ENCODE measurements at regions of chr7 and their contacts with region 1.

Region 1: DNA sequence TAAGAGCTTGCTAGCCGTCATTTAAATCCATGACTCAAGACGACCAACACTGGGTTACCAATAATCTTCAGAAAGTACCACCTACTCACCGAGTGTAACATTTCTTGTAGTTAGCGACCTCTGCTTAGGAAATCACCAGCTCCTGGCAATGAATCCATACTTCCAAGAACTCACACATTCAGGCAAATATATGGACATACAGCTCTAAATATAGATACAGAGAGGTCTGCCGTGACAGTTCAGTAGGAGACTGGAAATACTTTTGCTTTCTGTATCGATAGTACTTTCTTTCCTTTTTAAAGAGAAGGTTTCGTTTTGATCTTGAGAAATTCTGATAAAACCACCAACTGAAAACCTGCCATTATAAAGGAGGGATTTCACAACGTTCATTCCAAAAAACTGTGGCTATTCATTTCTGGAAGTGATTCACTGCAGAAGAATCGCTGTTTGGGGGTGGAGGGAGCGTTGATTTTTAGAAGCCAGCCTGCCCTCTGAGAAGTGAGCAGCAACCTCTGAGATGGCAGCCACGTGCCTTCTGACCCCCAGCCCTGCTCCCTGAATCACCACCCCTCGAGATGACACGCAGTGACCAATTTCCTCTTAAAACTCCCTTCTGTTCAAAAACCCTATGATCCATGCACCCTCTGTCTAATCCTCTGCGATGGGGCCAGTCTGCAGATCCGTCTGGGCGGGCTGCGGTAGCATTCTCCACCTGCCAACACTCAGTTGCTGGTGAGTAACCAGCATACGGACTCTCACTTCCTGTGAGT is 179.0 kb upstream of the KLF14 start:
- DNase-seq: peak; percentile 92
- ATAC-seq: peak; percentile 73
- H3K4me3 Mint-ChIP-seq: peak overlapping the region; percentile 88
- H3K27ac Mint-ChIP-seq: peak overlapping the region; percentile 99
- H3K4me1 Mint-ChIP-seq: peaks cover 90% of the 10 kb centered on the region
- H3K27me3 Mint-ChIP-seq: no peaks in the 10 kb centered on the region

Region 2: GRCh38 chr7:129952653-129953560 is 960.1 kb before region 1 on chr7 and contains the start of gene UBE2H:
- CTCF ChIA-PET with region 1: no interaction called
- POLR2A ChIA-PET with region 1: no interaction called
- intact Hi-C with region 1: loop called in 1 of 2 experiments (anchors 2 kb)
- DNase-seq: peak; percentile 96
- ATAC-seq: peak; percentile 66
- H3K4me3 Mint-ChIP-seq: no peak within 1 kb of the TSS
- H3K27ac Mint-ChIP-seq: peak within 1 kb of the TSS; percentile 99
- H3K4me1 Mint-ChIP-seq: peaks cover 8% of the 10 kb centered on the region
- H3K27me3 Mint-ChIP-seq: no peaks in the 10 kb centered on the region
- total RNA-seq, gene UBE2H: 25.6 to 40.7 TPM

Region 3: DNA sequence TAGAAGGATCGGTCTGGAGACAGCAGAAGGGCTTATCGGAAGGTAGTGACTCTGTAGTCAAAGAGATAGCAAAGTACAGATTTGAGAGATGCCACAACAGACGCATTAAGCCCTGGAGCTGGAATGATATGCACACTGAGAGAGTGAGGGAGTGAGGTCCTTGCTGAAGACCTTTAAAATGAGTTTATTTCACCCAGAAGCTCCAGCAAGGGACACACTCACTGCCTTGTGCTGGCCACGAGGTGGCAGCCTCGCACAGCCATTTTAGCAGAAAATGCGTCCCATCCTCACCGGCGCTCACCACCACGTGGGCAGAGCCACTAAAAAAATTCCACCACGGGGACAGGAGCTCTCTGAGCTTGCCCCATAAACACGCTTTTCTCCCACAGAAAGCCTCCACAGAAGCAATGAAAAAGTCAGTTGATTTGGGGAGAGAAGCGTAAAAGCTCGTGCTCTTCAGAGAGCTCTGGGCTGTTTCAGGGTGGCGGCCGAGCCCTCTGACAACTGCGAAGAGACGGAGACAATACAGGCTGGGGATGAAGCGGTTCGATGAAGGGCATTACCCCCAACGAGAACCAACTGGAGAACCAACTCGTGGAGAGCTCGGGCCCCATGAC is 16.0 kb before region 1 on chr7:
- CTCF ChIA-PET with region 1: interaction called, 96 read pairs
- POLR2A ChIA-PET with region 1: interaction called, 35 read pairs
- intact Hi-C with region 1: loop called (anchors 1 kb)
- DNase-seq: peak; percentile 87
- ATAC-seq: peak; percentile 56
- H3K4me3 Mint-ChIP-seq: peak overlapping the region; percentile 22
- H3K27ac Mint-ChIP-seq: peak overlapping the region; percentile 88
- H3K4me1 Mint-ChIP-seq: peaks cover 94% of the 10 kb centered on the region
- H3K27me3 Mint-ChIP-seq: no peaks in the 10 kb centered on the region

Region 4: DNA sequence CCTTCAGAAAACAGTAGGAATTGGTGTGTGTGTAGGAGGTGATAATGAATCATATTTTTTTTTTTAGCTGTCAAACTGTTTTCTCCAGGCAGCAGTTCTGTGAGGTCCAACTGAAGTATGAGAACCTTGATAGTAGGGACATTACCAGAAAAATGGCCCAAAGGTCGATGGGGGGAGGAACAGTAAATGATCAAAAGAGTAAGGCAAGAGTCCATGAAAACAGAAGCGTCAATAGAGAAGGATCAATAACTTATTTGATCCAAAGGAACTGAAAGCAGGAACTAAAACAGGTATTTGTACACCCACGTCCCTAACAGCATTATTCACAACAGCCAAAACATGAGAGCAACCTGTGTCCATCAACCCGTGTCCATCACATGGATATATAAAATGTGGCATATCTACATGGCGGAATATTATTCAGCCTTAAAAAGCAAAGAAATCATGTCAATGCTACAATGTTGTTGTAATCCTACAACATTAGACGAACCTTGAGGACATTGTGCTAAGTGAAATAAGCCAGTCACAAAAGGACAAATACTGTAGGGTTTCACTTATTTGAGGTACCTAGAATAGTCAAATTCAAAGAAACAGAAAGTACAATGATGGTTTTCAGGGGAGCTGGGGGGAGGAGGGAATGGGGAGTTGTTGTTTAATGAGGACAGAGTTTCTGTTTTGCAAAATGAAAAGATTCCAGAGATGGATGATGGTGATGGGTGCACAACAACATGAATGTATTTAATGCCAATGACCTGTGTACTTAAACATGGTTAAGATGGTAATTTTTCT is 34.9 kb after region 1 on chr7:
- CTCF ChIA-PET with region 1: interaction called, 7 read pairs
- POLR2A ChIA-PET with region 1: interaction called, 14 read pairs
- intact Hi-C with region 1: loop called (anchors 1 kb)
- DNase-seq: no peak
- ATAC-seq: peak; percentile 12
- H3K4me3 Mint-ChIP-seq: peak overlapping the region; percentile 58
- H3K27ac Mint-ChIP-seq: peak overlapping the region; percentile 85
- H3K4me1 Mint-ChIP-seq: peaks cover 60% of the 10 kb centered on the region
- H3K27me3 Mint-ChIP-seq: no peaks in the 10 kb centered on the region

Region 5: DNA sequence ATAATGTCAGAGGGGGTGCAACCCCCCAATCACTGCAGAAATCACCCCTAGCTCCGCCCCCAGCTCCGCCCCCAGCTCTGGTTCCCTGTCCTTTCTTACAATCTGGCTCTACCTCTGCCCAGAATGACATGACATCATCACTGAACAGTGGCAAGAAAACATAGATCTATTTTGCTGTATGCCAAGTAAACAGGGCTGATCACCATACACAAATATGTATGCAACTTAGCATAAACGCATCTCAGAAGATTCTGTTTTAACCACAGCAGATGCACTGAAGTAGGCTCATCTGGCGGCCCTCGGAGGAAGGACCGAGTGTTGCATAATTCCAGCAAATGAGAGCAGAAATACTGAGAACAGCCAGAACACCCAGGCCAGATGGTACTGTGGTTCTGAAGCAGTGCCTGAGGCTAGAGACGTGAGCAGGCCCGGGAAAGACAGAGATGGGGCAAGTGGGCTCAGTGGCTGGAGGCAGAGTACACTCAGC is 114.3 kb after region 1 on chr7:
- CTCF ChIA-PET with region 1: interaction called, 3 read pairs
- POLR2A ChIA-PET with region 1: interaction called, 8 read pairs
- intact Hi-C with region 1: loop called (anchors 1 kb)
- DNase-seq: peak; percentile 70
- ATAC-seq: peak; percentile 27
- H3K4me3 Mint-ChIP-seq: peak overlapping the region; percentile 25
- H3K27ac Mint-ChIP-seq: peak overlapping the region; percentile 85
- H3K4me1 Mint-ChIP-seq: peaks cover 85% of the 10 kb centered on the region
- H3K27me3 Mint-ChIP-seq: no peaks in the 10 kb centered on the region

Region 6: GRCh38 chr7:131231381-131232220 is 318.6 kb after region 1 on chr7:
- CTCF ChIA-PET with region 1: no interaction called
- POLR2A ChIA-PET with region 1: no interaction called
- intact Hi-C with region 1: loop called in 1 of 2 experiments (anchors 2 kb)
- DNase-seq: peak; percentile 77
- ATAC-seq: peak; percentile 72
- H3K4me3 Mint-ChIP-seq: peak overlapping the region; percentile 56
- H3K27ac Mint-ChIP-seq: peak overlapping the region; percentile 93
- H3K4me1 Mint-ChIP-seq: peaks cover 47% of the 10 kb centered on the region
- H3K27me3 Mint-ChIP-seq: no peaks in the 10 kb centered on the region

Measured in activated CD4-positive, alpha-beta T cell treated with anti-CD3 and anti-CD28 coated beads for 36 hours (primary cell).